Cardiac septum (tissue), 1 donor: ENCODE measurements at regions of chr13 and their contacts with region 1.

Region 1: DNA sequence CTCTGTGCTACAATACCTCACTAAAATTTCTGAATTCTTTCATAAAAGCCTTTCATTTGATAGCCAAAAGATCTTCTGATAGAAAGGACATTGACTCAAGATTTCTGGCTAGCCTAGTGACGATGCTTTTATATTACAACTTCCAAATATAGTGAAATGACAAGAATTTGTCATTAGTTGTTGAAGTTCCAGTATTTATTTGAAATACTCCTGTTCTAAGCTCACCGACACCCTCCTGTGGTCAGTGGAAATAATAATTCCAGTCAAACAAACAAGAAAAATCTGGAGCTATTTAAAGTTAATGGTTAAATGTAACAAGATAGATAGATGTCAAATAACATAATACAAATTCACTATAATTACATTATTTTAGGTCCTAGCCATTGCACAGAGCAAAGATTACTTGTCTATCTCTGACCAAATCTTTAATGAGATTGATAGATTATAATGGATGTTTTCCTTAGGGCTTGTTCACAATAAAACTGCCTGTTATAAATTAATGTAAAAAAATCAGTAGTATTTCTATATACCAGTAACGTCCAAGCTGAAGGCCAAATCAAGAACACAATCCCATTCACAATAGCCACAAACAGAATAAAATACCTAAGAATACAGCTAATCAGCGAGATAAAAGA is 195.5 kb downstream of the RGCC start:
- DNase-seq: no peak

Region 2: GRCh38 chr13:41178040-41178439 is 474.8 kb before region 1 on chr13:
- intact Hi-C with region 1: no loop called
- DNase-seq: no peak

Region 3: DNA sequence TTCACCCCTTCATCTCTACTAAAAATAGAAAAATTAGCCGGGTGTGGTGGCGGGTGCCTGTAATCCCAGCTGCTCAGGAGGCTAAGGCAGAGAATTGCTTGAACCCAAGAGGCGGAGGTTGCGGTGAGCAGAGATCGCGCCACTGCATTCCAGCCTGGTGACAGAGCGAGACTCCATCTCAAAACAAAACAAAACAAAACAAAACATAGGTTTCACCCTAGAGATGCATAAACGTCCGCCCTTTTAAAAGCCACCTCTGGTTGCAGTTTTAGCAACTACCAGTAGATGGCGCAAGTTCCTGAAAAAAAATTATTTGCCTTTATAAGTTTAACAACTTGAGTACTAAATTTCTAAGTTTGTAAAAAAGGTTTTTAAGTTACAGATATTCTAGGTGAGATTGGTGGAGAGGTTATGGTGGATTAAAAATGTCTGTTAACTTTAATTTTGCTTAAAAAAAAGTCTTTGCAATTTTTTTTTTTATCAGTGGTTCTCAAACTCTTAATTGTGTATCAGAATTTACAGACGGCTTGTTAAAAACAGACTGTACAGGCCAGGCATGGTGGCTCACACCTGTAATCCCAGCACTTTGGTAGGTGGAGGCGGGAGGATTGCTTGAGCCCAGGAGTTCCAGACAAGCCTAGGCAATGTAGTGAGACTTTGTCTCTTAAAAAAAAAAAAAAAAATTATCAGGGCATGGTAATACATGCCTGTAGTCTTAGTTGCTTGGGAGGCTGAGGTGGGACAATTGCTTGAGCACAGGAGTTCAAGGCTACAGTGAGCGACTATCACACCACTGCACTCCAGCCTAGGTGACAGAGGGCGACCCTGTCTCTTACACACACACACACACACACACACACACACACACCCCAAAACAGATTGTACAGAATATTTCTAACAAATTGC is 299.7 kb before region 1 on chr13:
- intact Hi-C with region 1: loop called (anchors 5 kb)
- DNase-seq: no peak

Region 4: DNA sequence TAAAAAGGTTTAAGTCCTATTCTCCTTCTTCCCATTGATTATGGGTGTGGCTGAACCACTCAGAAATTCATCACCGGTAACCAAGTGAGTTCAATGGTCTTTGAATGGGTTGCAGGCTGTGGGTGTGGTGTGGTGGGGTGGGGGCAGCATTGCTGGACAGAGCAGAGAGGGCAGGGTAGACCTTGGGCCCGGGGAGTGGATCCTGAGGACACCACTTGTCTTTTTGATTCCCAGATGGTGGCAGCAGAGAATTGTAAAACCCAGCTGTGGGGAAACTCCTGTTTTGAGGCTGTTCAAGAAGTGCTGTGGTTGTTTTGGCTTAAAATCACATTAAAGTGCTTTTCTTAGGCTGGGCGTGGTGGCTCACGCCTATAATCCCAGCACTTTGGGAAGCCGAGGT is 241.3 kb before region 1 on chr13:
- intact Hi-C with region 1: loop called (anchors 1 kb)
- DNase-seq: no peak

Region 5: DNA sequence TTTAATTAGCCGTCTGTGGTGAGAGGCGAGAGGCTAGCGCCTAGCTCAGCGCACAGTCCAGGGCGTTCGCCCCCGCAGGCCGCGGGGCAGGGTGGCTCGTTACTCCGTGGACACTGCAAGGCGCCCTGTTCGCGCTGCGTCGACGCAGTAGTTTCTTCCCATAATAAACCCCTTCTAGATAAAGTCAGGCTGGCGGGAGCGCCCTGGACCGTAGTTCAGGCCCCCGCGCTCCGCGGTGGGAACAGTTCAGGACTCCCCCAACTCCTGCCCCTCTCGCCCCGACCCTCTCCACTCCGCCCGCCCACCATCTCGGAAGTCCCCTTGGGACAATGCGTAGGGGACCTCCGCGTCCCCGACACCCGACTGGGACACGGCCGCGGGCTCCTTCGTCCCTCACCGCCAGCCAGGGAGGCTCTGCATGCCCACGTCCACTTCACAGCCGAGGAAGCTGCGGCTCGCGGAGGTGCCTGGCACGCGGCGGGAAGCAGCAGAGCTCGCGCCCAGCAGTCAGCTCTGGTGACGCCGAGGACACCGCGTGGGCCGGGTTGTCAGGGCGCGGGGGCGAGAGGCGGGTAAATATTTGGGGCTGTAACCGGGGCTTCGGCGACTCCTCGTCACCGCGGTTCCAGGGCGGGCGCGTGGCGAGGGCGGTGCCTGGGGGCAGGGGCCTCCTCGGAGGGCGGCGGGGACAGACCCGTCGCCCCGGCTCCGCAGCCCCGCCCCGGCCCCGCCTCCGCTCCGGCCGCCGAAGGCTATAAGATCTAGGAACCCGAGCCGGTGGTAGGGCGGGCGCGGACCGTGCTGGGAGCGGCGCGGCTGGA is 195.9 kb before region 1 on chr13 and contains the start of gene RGCC:
- intact Hi-C with region 1: loop called (anchors 2 kb)
- DNase-seq: peak; percentile 93
- total RNA-seq, gene RGCC: 41.4 TPM

Region 6: DNA sequence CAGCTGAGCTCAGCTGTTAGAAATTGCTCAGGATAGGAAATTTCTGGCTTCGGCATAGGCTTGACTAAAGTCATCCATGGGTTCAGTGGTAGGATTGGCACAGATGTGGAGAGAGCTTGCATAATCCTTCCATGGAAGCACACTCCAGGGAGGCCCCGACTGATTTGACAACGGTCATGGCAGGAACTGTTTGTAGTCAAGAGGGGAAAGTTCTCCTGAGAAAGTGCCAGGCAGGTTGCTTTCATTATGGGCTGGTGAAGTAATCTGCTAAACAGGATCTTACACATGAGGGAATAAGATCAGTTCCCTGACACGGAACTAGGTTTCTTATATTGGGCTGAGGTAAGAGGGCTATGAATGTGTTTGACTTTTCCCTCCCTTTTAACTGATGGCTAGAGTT is 75.4 kb before region 1 on chr13:
- intact Hi-C with region 1: no loop called
- DNase-seq: no peak

Region 7: DNA sequence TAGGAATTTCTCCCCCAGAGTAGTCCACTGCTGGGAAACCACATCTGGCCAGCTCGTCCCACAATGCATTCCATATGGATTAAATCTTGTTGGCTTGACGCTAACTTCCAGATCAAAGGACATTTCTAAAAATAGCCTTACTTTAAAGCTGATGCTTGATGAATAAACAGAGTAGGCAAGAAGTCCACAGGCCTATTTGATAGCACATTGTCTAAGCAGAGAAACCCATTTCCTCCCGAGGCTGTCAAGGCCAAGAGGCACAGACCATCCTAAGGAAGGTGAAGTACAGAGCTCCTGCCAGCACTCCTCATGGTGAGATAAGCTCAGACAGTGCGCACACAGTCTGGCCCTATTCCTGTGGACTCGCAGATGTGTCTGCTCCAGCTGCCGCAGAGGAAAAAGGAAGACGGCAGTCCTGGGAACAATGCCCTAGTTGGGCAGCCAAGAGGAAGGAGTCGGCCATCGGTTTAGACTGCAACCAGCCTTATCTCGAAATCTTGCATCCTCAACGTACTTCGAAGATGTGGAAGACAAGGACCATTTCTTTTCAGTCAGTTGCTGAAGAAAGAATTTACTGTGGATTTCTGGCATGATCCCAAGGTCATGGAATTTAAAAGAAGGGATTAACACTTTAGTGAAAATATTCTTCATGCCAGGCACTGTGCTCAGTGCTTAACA is 38.7 kb before region 1 on chr13:
- intact Hi-C with region 1: loop called (anchors 5 kb)
- DNase-seq: peak; percentile 91